Panc1 (cell line): ENCODE measurements at regions of chr2 and their contacts with region 1.

Region 1: GRCh38 chr2:122500316-122501105 is 745.1 kb downstream of the TSN start:
- DNase-seq: no peak
- ATAC-seq: no peak
- H3K4me3 ChIP-seq: no peak overlapping the region
- H3K27ac ChIP-seq: no peak overlapping the region
- H3K4me1 ChIP-seq: no peaks in the 10 kb centered on the region
- H3K27me3 ChIP-seq: no peaks in the 10 kb centered on the region
- CTCF ChIP-seq: no peak

Region 2: DNA sequence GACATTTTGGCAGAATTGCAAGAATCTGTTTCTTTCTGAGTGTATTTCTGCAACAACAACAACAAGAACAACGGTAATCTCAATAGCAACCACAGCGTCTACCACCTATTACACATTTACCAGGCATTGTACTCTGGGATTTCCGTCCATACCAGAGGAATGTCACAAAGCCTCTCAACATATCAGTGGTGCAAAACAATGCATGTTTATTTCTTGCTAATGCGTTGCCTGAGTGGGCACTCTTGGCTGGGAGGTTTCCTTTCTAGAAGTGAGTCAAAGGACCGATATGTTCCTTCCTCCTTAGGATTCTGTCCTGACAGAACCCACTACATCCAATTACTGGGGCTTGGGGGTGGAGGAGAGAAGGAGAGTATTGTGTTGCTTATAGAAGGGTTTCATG is 159.5 kb before region 1 on chr2:
- CTCF ChIA-PET with region 1: no interaction called
- POLR2A ChIA-PET with region 1: no interaction called
- in situ Hi-C with region 1: no loop called
- intact Hi-C with region 1: no loop called
- DNase-seq: no peak
- ATAC-seq: no peak
- H3K4me3 ChIP-seq: no peak overlapping the region
- H3K27ac ChIP-seq: no peak overlapping the region
- H3K4me1 ChIP-seq: no peaks in the 10 kb centered on the region
- H3K27me3 ChIP-seq: no peaks in the 10 kb centered on the region
- CTCF ChIP-seq: no peak

Region 3: GRCh38 chr2:122363885-122364284 is 136.6 kb before region 1 on chr2:
- CTCF ChIA-PET with region 1: no interaction called
- POLR2A ChIA-PET with region 1: interaction called, 10 read pairs
- in situ Hi-C with region 1: no loop called
- intact Hi-C with region 1: no loop called
- DNase-seq: no peak
- ATAC-seq: no peak
- H3K4me3 ChIP-seq: no peak overlapping the region
- H3K27ac ChIP-seq: no peak overlapping the region
- H3K4me1 ChIP-seq: no peaks in the 10 kb centered on the region
- H3K27me3 ChIP-seq: no peaks in the 10 kb centered on the region
- CTCF ChIP-seq: no peak

Region 4: DNA sequence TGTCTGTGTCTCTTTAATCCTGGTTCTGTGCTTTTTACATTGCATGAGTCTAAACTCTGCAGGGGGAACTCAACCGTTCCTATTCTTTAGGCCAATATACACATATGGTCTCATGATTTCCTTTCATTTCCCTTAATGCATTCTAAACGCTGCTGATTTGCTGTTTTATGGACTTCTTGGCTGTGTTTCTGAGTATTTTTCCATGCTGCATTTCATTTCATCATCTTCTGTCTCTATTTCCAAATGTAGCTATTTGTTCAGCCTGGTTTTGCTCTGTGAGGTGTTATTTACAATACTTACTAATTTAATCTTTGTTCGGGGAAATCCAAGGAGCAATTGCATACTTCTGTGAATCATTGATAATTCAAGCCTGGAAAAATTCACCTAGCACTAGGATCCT is 152.2 kb after region 1 on chr2:
- CTCF ChIA-PET with region 1: no interaction called
- POLR2A ChIA-PET with region 1: no interaction called
- in situ Hi-C with region 1: no loop called
- intact Hi-C with region 1: no loop called
- DNase-seq: no peak
- ATAC-seq: no peak
- H3K4me3 ChIP-seq: no peak overlapping the region
- H3K27ac ChIP-seq: no peak overlapping the region
- H3K4me1 ChIP-seq: no peaks in the 10 kb centered on the region
- H3K27me3 ChIP-seq: no peaks in the 10 kb centered on the region
- CTCF ChIP-seq: no peak